GM12878 (cell line): ENCODE measurements at regions of chr4 and their contacts with region 1.

Region 1: GRCh38 chr4:40228497-40229365 is 31.9 kb downstream of the RHOH start:
- DNase-seq: peak; percentile 77
- ATAC-seq: peak; percentile 56
- H3K4me3 ChIP-seq: peak overlapping the region; percentile 13; the same call in 1 of the 2 replicates
- H3K27ac ChIP-seq: peak overlapping the region; percentile 84
- H3K4me1 ChIP-seq: peaks cover 59% of the 10 kb centered on the region
- H3K27me3 ChIP-seq: no peaks in the 10 kb centered on the region
- CTCF ChIP-seq: peak; percentile 28 to 65 (median 45); a peak in 5 of 6 replicates
- EP300 ChIP-seq: peak in 1 of 2 experiments; percentile 66; a peak in 3 of 4 replicates
- POLR2A ChIP-seq: no peak
- RAD21 ChIP-seq: peak; percentile 44

Region 2: DNA sequence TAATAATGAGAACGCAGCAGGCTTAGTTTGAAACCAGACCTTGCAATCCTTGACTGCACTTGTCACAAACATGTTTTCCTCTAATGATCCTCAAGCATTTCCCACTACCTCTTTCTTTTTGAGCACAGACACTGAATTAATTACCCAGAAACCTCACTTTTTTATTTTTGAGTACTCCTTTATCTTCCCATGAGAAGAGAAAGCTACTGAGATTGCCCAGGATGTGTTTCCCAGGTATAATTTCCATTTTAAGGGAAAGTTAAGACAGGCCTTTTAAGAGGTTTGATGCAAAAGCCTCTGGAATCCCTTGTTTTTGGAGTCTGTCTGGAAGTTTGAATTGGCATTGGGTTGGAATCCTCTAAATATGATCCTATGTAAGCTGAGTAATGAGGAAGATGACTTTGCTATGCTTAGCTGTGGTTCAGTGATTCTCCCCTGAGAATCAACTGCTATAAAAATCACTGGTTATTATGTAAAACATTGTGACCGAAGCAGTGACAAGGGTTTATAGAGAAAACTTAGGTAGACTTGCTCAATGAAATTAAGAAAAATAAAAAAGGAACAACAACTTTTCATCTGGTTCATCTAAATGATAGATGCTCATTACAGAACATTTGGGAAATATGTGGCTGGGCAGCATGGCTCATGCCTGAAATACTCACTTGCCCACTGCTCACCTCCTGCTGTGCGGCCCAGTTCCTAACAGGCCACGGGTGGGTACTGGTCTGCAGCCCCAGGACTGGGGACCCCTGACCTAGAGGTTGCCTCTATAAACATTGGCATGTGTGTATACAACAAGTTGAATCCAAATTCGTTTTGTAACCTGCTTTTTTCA is 42.7 kb before region 1 on chr4:
- CTCF ChIA-PET with region 1: interaction called, 13 read pairs
- POLR2A ChIA-PET with region 1: interaction called, 13 read pairs
- RAD21 ChIA-PET with region 1: interaction called, 50 read pairs
- SMC1A ChIA-PET with region 1: interaction called, 20 read pairs
- in situ Hi-C with region 1: no loop called
- intact Hi-C with region 1: loop called (anchors 2 kb)
- DNase-seq: peak; percentile 94
- ATAC-seq: peak; percentile 66
- H3K4me3 ChIP-seq: no peak overlapping the region
- H3K27ac ChIP-seq: peak overlapping the region; percentile 89
- H3K4me1 ChIP-seq: peaks cover 46% of the 10 kb centered on the region
- H3K27me3 ChIP-seq: no peaks in the 10 kb centered on the region
- CTCF ChIP-seq: no peak
- EP300 ChIP-seq: peak; percentile 81 to 90
- POLR2A ChIP-seq: 0 out of 2 replicates have a peak, but pooled peaks have one; percentile 31
- RAD21 ChIP-seq: 0 out of 2 replicates have a peak, but pooled peaks have one; percentile 0

Region 3: DNA sequence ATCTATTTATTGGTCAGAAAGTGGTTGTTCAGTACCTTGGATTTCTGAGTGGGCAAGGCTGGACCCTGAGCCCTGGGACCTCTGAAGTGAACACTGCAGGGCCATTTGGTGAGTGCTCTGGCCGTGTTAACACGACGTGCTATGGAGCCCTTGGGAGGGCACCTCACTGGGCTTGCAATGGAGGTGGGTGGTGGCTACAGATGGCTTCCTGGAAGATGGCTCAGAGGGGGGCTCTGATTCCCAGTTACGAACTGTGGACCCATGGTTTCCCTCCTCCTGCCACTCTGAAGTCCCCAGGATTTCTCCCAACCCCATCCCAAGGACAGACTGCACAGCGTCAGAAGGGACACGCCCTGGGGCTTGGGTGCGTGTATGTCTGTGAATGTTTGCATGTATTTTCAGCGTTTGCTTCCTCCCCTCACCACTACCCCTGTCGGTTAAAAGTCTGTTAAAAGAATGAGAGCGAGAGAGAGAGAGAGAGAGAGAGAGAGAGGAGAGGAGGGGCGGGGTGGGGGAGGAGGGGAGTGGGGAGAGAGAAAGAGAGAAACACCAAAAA is 35.6 kb before region 1 on chr4:
- CTCF ChIA-PET with region 1: interaction called, 9 read pairs
- POLR2A ChIA-PET with region 1: interaction called, 13 read pairs
- RAD21 ChIA-PET with region 1: interaction called, 50 read pairs
- SMC1A ChIA-PET with region 1: interaction called, 5 read pairs
- in situ Hi-C with region 1: no loop called
- intact Hi-C with region 1: no loop called
- DNase-seq: no peak
- ATAC-seq: peak; percentile 40
- H3K4me3 ChIP-seq: peak overlapping the region; percentile 88
- H3K27ac ChIP-seq: peak overlapping the region; percentile 92
- H3K4me1 ChIP-seq: peaks cover 9% of the 10 kb centered on the region
- H3K27me3 ChIP-seq: no peaks in the 10 kb centered on the region
- CTCF ChIP-seq: 0 out of 6 replicates have a peak, but pooled peaks of 1 of the 3 experiments have one; percentile 3
- EP300 ChIP-seq: 0 out of 4 replicates have a peak, but pooled peaks of 1 of the 2 experiments have one; percentile 25
- POLR2A ChIP-seq: peak; percentile 81
- RAD21 ChIP-seq: peak; percentile 17; the same call in 1 of the 2 replicates

Region 4: GRCh38 chr4:40212674-40213527 is 15.8 kb before region 1 on chr4:
- CTCF ChIA-PET with region 1: interaction called, 8 read pairs
- POLR2A ChIA-PET with region 1: interaction called, 16 read pairs
- RAD21 ChIA-PET with region 1: interaction called, 56 read pairs
- SMC1A ChIA-PET with region 1: interaction called, 160 read pairs
- in situ Hi-C with region 1: no loop called
- intact Hi-C with region 1: no loop called
- DNase-seq: no peak
- ATAC-seq: peak; percentile 10
- H3K4me3 ChIP-seq: peak overlapping the region; percentile 57; the same call in 1 of the 2 replicates
- H3K27ac ChIP-seq: peak overlapping the region; percentile 27
- H3K4me1 ChIP-seq: peaks cover 45% of the 10 kb centered on the region
- H3K27me3 ChIP-seq: no peaks in the 10 kb centered on the region
- CTCF ChIP-seq: no peak
- EP300 ChIP-seq: no peak
- POLR2A ChIP-seq: no peak
- RAD21 ChIP-seq: no peak

Region 5: DNA sequence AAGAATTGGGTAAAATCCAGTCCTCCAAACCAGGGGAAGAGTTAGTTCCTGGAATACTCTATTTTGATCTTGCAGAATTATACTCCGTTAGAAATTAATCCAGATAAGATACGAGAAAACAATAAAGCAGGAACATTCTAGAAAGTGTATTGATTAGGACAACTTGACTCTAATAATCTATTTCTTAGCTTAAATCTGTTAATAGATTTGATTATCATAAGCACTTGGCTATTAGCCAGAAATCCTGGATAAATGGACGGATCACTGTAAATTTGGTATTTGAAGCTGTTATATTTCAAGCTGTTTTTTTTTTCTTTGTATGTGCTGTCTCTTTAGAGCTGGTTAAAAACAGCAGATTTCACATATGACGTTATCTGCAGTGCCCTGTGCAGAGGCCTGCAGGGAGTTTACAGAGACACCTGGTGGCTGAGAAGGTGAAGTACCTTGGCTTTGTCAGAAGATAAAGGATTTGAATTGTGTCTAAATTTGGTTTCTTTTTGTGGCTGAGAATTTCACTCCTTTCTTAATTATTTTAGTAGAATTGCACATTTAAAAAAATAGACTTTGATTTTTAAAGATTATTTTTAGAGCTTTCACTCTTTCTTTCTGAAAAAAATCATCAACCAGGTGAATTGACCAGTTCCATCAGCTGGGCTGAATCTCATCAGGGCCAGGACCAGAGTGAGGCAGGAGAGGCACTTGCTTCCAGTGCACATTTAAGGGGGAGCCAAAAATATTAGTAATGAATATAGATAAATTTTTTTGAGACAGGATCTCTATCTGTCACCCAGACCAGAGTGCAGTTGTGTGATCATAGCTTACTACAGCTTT is 96.7 kb after region 1 on chr4:
- CTCF ChIA-PET with region 1: interaction called, 10 read pairs
- POLR2A ChIA-PET with region 1: no interaction called
- RAD21 ChIA-PET with region 1: interaction called, 5 read pairs
- SMC1A ChIA-PET with region 1: interaction called, 3 read pairs
- in situ Hi-C with region 1: no loop called
- intact Hi-C with region 1: no loop called
- DNase-seq: no peak
- ATAC-seq: peak; percentile 98
- H3K4me3 ChIP-seq: no peak overlapping the region
- H3K27ac ChIP-seq: no peak overlapping the region
- H3K4me1 ChIP-seq: no peaks in the 10 kb centered on the region
- H3K27me3 ChIP-seq: no peaks in the 10 kb centered on the region
- CTCF ChIP-seq: peak; percentile 86 to 94 (median 89)
- EP300 ChIP-seq: no peak
- POLR2A ChIP-seq: no peak
- RAD21 ChIP-seq: peak; percentile 96

Region 6: GRCh38 chr4:40471923-40472322 is 243.2 kb after region 1 on chr4:
- CTCF ChIA-PET with region 1: no interaction called
- POLR2A ChIA-PET with region 1: no interaction called
- RAD21 ChIA-PET with region 1: no interaction called
- SMC1A ChIA-PET with region 1: no interaction called
- in situ Hi-C with region 1: no loop called
- intact Hi-C with region 1: no loop called
- DNase-seq: no peak
- ATAC-seq: no peak
- H3K4me3 ChIP-seq: no peak overlapping the region
- H3K27ac ChIP-seq: no peak overlapping the region
- H3K4me1 ChIP-seq: peaks cover 14% of the 10 kb centered on the region
- H3K27me3 ChIP-seq: no peaks in the 10 kb centered on the region
- CTCF ChIP-seq: no peak
- EP300 ChIP-seq: no peak
- POLR2A ChIP-seq: no peak
- RAD21 ChIP-seq: no peak